Activated B cell treated with CpG ODN at 0.5 μM for 24 hours (primary cell): ENCODE measurements at regions of chr4 and their contacts with region 1.

Region 1: DNA sequence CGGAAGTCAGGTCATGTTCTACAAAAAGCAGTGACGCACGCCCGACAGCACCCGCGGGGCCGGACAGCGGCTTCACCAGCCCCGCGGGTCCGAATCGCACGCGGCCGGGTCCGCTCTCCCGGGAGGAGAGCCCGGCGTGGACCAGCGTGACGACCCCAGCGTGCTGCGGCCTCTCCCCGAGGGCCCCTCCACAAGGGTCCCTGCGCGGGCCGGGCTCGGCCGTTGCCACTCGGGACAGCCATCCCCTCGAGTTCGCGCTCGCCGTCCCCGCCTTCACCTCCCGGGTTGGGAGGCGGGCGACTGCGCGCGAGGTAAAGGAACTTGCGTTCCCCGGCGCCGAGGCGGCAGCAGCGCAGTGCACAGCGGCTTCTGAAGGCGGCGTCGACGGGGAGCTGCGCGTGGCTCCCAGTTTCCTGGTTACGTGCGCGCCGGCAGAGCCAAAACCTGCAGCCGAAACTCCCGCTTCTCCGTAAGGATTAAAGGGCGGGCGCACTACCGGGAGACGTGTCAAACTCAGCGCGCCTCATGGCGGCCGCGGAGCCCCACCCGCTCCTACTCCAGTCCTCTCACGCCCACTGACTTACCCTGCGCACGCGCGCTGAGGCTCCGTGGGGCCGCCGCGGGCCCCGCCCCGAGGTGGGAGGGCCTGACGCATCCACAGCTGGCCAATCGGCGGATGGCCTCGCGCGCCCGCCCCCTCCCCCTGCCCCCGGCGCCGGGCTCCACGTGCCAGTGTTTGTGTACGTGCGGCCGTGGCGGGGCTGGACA is 416 bp upstream of the LRP2BP start:
- DNase-seq: peak; percentile 98
- ATAC-seq: peak; percentile 89
- H3K4me3 Mint-ChIP-seq: peak overlapping the region; percentile 94
- H3K27ac Mint-ChIP-seq: peak overlapping the region; percentile 94
- H3K4me1 Mint-ChIP-seq: peaks cover 63% of the 10 kb centered on the region
- H3K27me3 Mint-ChIP-seq: no peaks in the 10 kb centered on the region
- CTCF ChIP-seq: no peak

Region 2: DNA sequence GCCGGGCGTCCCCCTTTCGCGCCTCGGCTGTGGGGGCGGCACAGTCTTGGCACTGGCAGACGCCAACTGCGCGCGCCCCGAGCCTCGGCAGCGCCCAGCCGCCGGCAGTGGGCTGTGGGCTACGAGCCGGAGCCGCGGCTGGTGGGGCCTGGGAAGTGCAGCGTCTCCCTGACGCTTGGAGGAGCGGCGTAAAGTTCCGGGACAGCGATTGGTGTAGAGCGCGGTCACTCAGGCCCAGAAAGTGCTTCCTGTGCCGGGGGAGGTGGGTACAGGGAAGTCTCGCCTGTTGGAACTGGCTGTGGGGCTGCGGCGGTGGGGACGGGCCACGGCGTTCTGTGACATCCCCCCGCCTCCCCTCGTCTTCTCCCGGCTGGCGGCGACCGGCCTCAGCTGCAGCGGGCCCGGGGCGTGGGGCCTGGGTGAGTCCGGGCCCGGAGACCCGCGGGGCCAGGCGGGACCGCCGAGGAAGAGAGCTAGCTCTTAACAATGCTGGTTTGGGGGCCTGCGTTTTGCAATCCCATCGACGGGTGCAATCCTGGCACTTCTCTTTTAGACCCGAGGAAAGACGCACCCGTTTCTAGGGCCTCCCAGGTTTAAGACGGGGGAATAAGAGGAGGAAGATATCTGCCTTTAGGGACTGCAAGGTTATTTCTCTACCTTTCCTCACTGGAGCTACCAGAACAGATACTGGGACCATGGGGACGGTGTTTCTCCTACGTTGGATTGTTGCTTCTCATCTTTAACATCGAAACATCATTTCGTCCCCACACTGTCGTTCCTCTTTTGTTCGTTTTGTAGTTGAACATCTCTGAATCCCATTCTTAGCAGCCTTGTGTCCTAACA is 1736.9 kb before region 1 on chr4 and contains the starts of genes RWDD4 and TRAPPC11:
- CTCF ChIA-PET with region 1: no interaction called
- POLR2A ChIA-PET with region 1: no interaction called
- intact Hi-C with region 1: loop called (anchors 2 kb)
- DNase-seq: peak; percentile 87
- ATAC-seq: peak; percentile 98
- H3K4me3 Mint-ChIP-seq: peak within 1 kb of the TSS; percentile 93
- H3K27ac Mint-ChIP-seq: peak within 1 kb of the TSS; percentile 92
- H3K4me1 Mint-ChIP-seq: peaks cover 33% of the 10 kb centered on the region
- H3K27me3 Mint-ChIP-seq: no peaks in the 10 kb centered on the region
- CTCF ChIP-seq: no peak
- total RNA-seq, gene RWDD4: 14.6 and 15.4 TPM in 2 replicates
- total RNA-seq, gene TRAPPC11: 42.9 and 45.2 TPM in 2 replicates

Region 3: DNA sequence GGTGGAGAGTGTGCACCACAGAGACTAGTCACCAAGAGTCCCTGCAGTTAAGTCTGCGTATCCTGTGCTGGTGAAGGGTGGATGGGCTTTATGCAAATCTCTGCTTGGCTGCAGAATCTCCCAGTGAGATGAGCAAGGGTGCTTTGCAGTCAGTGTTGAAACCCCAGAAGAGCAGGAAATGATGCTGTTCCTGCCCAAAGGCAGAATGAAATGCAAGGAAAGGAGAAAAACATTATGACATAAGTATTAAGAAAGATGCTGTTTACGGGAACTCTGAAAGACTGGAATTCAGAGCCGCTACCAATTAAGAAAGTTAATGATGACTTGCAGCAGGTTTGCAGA is 545.0 kb before region 1 on chr4:
- CTCF ChIA-PET with region 1: no interaction called
- POLR2A ChIA-PET with region 1: interaction called, 3 read pairs
- intact Hi-C with region 1: loop called (anchors 10 kb)
- DNase-seq: no peak
- ATAC-seq: peak; percentile 71
- H3K4me3 Mint-ChIP-seq: no peak overlapping the region
- H3K27ac Mint-ChIP-seq: no peak overlapping the region
- H3K4me1 Mint-ChIP-seq: peaks cover 38% of the 10 kb centered on the region
- H3K27me3 Mint-ChIP-seq: no peaks in the 10 kb centered on the region
- CTCF ChIP-seq: no peak

Region 4: DNA sequence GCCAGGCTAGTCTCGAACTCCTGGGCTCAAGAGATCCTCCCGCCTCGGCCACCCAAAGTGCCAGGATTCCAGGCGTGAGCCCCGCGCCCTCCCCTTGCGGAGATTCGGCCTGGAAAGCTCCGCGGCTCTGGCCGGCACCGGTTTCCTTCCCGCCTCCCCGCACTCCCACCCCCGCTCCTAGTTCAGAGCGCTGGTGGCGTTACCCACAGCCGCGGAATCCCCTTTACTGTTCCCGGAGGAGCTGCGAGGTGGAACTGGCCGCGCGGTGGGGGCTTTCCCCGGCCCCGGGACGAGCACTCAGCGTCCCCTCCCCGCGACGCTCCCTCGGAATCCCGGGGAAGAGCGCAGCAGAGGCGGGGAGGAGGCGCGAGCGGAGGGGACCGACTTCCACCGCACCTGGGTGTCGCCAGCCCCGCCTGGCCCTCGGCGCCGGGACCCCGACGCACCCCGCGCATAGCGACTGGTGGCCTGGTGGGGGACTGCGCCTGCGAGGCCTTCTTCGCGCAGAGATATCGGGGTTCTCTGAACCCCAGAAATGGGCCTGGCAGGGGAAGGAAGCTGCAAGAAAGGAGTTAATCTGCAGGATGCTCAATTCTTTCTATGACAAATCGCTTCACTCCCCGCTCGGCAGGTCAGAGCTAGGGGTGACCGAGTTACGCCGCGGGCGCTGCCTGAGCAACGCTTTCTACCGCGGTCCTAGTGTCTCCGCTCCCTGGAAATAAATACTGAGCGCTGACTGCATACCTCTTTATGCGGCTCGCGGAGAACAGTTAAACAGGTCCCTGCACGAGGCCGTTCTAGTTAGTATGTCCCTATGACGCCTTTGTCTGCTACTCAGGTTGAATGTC is 267.6 kb before region 1 on chr4:
- CTCF ChIA-PET with region 1: no interaction called
- POLR2A ChIA-PET with region 1: no interaction called
- intact Hi-C with region 1: no loop called
- DNase-seq: peak; percentile 42
- ATAC-seq: peak; percentile 72
- H3K4me3 Mint-ChIP-seq: peak overlapping the region; percentile 80
- H3K27ac Mint-ChIP-seq: no peak overlapping the region
- H3K4me1 Mint-ChIP-seq: peaks cover 9% of the 10 kb centered on the region
- H3K27me3 Mint-ChIP-seq: peaks cover 18% of the 10 kb centered on the region
- CTCF ChIP-seq: no peak

Region 5: DNA sequence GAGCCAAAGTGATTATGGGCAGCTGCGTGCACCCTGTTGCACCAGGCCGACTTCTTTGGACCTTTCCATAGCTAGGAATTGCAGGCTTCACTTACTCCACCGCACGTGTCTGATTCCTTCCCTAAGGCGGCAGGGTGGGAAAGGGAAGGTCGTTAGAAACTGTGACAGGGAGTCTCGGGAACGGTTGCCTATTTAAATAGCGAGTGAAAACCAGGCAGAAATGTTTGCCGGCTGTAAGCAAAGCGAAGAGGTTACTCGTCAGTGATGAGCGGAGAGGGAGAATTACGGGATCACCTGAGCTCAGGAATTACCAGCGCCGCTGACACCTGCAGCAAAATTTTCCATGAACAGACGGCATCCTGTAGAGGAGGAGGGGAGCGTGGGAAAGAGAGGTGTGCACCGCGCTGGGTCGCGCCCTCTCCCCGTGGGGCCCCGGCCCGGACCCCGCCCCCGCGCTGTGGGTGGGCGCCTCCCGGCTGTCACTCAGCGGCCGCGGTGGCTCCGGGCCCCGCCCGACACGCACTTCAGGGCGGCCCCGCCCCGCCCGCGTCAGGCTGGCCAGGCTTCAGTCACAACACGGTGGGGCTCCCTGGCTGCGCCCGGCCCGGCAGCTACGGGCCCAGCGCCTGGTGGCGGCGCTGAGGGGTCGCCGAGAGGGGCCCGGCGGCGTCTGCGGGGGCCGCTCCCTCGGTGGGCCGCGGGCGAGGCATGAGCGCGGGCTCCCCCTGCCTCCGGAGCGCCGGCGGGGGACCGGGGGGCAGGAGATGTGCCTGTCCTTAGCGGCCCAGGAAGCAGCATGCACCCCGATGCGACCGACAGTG is 186.9 kb before region 1 on chr4 and contains the start of gene SNX25:
- CTCF ChIA-PET with region 1: no interaction called
- POLR2A ChIA-PET with region 1: interaction called, 12 read pairs
- intact Hi-C with region 1: loop called (anchors 1 kb)
- DNase-seq: peak; percentile 94
- ATAC-seq: peak; percentile 83
- H3K4me3 Mint-ChIP-seq: peak within 1 kb of the TSS; percentile 95
- H3K27ac Mint-ChIP-seq: peak within 1 kb of the TSS; percentile 94
- H3K4me1 Mint-ChIP-seq: peaks cover 63% of the 10 kb centered on the region
- H3K27me3 Mint-ChIP-seq: no peaks in the 10 kb centered on the region
- CTCF ChIP-seq: no peak
- total RNA-seq, gene SNX25: 53.1 and 53.7 TPM in 2 replicates

Region 6: DNA sequence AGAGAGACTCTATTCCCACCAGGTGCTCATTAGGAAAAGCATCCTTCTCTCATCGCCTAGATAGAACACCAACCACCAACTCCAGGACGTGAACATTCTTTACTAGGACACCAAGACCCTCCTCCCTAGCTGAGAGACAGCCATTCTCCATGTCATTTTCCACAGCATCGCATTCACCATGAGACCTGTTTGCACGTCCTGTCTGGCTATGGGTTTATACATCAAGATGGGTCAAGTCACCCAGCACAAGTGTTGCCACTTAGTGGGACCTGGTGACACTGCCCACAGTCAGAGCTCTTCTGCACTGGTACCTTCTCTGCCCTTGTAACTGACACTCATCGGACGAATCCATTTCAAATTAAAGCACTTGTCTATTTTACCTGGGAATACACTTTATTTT is 17.9 kb before region 1 on chr4:
- CTCF ChIA-PET with region 1: no interaction called
- POLR2A ChIA-PET with region 1: no interaction called
- intact Hi-C with region 1: no loop called
- DNase-seq: no peak
- ATAC-seq: no peak
- H3K4me3 Mint-ChIP-seq: no peak overlapping the region
- H3K27ac Mint-ChIP-seq: no peak overlapping the region
- H3K4me1 Mint-ChIP-seq: no peaks in the 10 kb centered on the region
- H3K27me3 Mint-ChIP-seq: no peaks in the 10 kb centered on the region
- CTCF ChIP-seq: no peak

Region 7: DNA sequence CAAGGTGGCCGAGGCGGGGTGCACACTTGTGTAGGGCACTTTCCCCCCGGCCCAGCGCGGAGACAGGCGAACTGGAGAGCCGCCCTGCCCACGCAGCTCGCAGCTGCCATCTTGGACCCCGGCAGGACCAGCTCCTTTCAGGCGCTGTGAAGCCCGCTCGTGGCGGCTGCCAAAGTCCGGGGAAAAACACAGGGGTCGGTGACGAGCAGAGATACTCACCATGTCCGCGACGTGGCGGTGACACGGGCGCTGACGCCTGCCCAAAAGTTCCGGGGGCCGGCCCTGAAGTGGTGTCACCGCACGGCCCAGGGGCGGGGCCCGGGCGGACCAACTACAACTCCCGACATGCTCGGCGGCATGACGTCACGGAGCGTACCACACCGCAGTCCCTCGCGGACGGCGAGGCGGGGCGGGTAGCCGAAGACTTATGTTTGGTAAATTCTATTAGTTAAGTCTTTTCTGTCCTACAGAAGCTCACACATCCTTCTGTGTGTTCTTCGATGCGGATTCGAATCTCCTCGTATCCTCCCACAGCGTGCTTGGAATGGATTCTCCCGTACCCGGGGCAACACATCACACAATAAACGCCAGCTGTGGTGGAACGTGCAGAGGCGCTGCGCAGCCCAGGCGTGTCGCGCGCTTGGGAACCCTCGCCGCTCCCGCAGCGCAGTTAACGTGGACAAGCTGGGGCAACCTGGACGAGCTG is 29.7 kb after region 1 on chr4 and contains the start of gene UFSP2:
- CTCF ChIA-PET with region 1: no interaction called
- POLR2A ChIA-PET with region 1: interaction called, 46 read pairs
- intact Hi-C with region 1: loop called (anchors 1 kb)
- DNase-seq: peak; percentile 92
- ATAC-seq: peak; percentile 86
- H3K4me3 Mint-ChIP-seq: peak within 1 kb of the TSS; percentile 89
- H3K27ac Mint-ChIP-seq: peak within 1 kb of the TSS; percentile 99
- H3K4me1 Mint-ChIP-seq: peaks cover 17% of the 10 kb centered on the region
- H3K27me3 Mint-ChIP-seq: no peaks in the 10 kb centered on the region
- CTCF ChIP-seq: no peak
- total RNA-seq, gene UFSP2: 20.1 and 21.6 TPM in 2 replicates

Region 8: DNA sequence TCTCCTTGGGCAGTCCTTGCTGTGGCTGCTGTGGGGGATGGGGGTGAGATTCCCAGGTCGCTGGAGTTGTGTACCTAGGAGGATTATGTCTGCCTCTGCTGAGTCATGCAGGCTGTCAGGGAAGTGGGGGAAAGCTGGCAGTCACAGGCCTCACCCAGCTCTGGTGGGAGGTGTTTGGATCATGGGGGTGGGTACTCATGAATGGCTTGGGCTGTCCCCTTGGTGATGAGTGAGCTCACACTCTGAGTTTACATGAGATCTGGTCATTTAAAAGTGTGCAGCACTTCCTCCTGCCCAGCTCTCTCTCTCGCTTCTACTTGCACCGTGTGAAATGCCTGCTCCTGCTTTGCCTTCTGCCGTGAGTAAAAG is 163.8 kb after region 1 on chr4:
- CTCF ChIA-PET with region 1: no interaction called
- POLR2A ChIA-PET with region 1: no interaction called
- intact Hi-C with region 1: no loop called
- DNase-seq: no peak
- ATAC-seq: no peak
- H3K4me3 Mint-ChIP-seq: no peak overlapping the region
- H3K27ac Mint-ChIP-seq: no peak overlapping the region
- H3K4me1 Mint-ChIP-seq: no peaks in the 10 kb centered on the region
- H3K27me3 Mint-ChIP-seq: peaks cover 36% of the 10 kb centered on the region
- CTCF ChIP-seq: no peak